Activated CD4-positive, alpha-beta memory T cell treated with anti-CD3 and anti-CD28 coated beads for 36 hours (primary cell): ENCODE measurements at regions of chr6 and their contacts with region 1.

Region 1: DNA sequence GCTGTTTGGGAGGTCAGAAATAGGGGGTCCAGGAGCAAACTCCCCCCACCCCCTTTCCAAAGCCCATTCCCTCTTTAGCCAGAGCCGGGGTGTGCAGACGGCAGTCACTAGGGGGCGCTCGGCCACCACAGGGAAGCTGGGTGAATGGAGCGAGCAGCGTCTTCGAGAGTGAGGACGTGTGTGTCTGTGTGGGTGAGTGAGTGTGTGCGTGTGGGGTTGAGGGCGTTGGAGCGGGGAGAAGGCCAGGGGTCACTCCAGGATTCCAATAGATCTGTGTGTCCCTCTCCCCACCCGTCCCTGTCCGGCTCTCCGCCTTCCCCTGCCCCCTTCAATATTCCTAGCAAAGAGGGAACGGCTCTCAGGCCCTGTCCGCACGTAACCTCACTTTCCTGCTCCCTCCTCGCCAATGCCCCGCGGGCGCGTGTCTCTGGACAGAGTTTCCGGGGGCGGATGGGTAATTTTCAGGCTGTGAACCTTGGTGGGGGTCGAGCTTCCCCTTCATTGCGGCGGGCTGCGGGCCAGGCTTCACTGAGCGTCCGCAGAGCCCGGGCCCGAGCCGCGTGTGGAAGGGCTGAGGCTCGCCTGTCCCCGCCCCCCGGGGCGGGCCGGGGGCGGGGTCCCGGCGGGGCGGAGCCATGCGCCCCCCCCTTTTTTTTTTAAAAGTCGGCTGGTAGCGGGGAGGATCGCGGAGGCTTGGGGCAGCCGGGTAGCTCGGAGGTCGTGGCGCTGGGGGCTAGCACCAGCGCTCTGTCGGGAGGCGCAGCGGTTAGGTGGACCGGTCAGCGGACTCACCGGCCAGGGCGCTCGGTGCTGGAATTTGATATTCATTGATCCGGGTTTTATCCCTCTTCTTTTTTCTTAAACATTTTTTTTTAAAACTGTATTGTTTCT is at the start of gene VEGFA:
- DNase-seq: peak; percentile 92
- H3K4me3 Mint-ChIP-seq: peak within 1 kb of the TSS; percentile 93
- H3K27ac Mint-ChIP-seq: peak within 1 kb of the TSS; percentile 82
- H3K4me1 Mint-ChIP-seq: peaks cover 20% of the 10 kb centered on the region
- H3K27me3 Mint-ChIP-seq: peaks cover 8% of the 10 kb centered on the region
- total RNA-seq, gene VEGFA: 28.9 to 35.1 TPM

Region 2: GRCh38 chr6:43629505-43630300 is 140.1 kb before region 1 on chr6:
- CTCF ChIA-PET with region 1: interaction called, 5 read pairs
- POLR2A ChIA-PET with region 1: interaction called, 10 read pairs
- intact Hi-C with region 1: loop called (anchors 2 kb)
- DNase-seq: peak; percentile 97
- H3K4me3 Mint-ChIP-seq: peak overlapping the region; percentile 93
- H3K27ac Mint-ChIP-seq: peak overlapping the region; percentile 98
- H3K4me1 Mint-ChIP-seq: peaks cover 29% of the 10 kb centered on the region
- H3K27me3 Mint-ChIP-seq: no peaks in the 10 kb centered on the region

Region 3: DNA sequence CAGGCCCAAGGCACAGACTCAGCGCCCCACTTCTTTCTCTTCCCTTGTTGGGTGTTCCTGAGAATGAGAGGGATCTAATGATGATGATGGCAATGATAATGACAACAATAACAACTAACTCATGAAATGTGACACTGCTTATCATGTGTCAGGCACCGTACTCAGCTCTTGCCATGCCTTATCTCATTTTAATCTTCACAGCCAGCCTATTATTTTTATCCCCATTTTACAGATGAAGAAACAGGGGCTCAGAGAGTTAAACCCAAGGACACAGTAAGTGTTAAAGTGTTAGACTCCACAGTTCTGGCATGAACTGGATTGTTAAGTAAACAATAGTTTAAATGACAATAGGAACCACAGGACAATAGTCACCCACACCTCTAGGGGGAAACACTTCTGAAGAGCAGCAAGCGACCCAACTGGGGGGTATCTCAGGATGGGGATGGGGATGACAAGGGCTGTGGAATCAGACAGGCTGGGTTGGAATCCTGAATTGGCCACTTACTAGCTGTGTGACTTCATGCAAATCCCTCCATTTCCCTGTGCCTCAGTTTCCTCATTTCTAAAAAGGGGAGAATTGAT is 112.5 kb before region 1 on chr6:
- CTCF ChIA-PET with region 1: no interaction called
- POLR2A ChIA-PET with region 1: no interaction called
- intact Hi-C with region 1: no loop called
- DNase-seq: no peak
- H3K4me3 Mint-ChIP-seq: no peak overlapping the region
- H3K27ac Mint-ChIP-seq: no peak overlapping the region
- H3K4me1 Mint-ChIP-seq: peaks cover 2% of the 10 kb centered on the region
- H3K27me3 Mint-ChIP-seq: peaks cover 5% of the 10 kb centered on the region

Region 4: GRCh38 chr6:43758617-43759050 is 11.1 kb before region 1 on chr6:
- CTCF ChIA-PET with region 1: interaction called, 19 read pairs
- POLR2A ChIA-PET with region 1: interaction called, 5 read pairs
- intact Hi-C with region 1: no loop called
- DNase-seq: peak; percentile 48
- H3K4me3 Mint-ChIP-seq: no peak overlapping the region
- H3K27ac Mint-ChIP-seq: no peak overlapping the region
- H3K4me1 Mint-ChIP-seq: peaks cover 5% of the 10 kb centered on the region
- H3K27me3 Mint-ChIP-seq: no peaks in the 10 kb centered on the region

Region 5: GRCh38 chr6:44002593-44003344 is 233.0 kb after region 1 on chr6:
- CTCF ChIA-PET with region 1: interaction called, 8 read pairs
- POLR2A ChIA-PET with region 1: no interaction called
- intact Hi-C with region 1: loop called (anchors 1 kb)
- DNase-seq: peak; percentile 80
- H3K4me3 Mint-ChIP-seq: peak overlapping the region; percentile 64
- H3K27ac Mint-ChIP-seq: no peak overlapping the region
- H3K4me1 Mint-ChIP-seq: peaks cover 12% of the 10 kb centered on the region
- H3K27me3 Mint-ChIP-seq: peaks cover 38% of the 10 kb centered on the region

Region 6: DNA sequence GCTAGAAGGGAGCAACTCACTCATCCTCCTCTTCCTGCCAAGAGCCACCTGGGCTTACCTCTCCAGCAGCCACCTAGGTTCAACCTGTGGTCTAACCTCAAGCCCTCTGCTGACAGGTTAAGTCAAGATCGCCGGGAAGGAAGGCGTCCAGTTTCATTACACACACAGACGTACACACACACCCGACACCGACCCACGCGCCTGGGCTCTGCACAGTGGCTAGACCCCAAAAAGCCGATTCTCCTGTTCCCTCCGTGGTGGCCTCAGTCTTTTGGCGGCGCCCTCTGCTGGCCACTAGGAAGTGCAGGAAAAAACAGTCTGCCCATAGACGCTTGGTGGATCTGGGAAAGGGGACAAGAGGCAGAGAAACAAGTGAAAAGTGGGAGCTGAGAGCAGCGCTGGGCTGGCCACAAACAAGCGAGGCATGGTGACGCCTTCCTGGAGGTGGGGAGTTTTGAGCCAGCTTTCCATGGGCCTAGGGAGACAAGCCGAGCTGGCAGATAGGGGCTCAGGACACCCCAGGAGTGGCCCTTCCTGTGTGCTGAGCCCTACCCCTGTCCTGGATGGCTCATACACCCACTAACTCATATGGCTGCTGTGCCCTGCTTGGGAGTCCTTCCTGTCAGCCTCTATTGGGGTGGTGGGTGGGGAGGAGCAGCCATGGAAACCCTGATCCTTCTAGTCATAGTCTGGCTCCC is 304.8 kb after region 1 on chr6:
- CTCF ChIA-PET with region 1: interaction called, 172 read pairs
- POLR2A ChIA-PET with region 1: interaction called, 27 read pairs
- intact Hi-C with region 1: loop called (anchors 1 kb)
- DNase-seq: peak; percentile 81
- H3K4me3 Mint-ChIP-seq: peak overlapping the region; percentile 81
- H3K27ac Mint-ChIP-seq: peak overlapping the region; percentile 24
- H3K4me1 Mint-ChIP-seq: peaks cover 15% of the 10 kb centered on the region
- H3K27me3 Mint-ChIP-seq: peaks cover 14% of the 10 kb centered on the region

Region 7: GRCh38 chr6:44246663-44247337 is 477.0 kb after region 1 on chr6 and contains the start of gene HSP90AB1:
- CTCF ChIA-PET with region 1: no interaction called
- POLR2A ChIA-PET with region 1: interaction called, 3 read pairs
- intact Hi-C with region 1: loop called (anchors 5 kb)
- DNase-seq: peak; percentile 99
- H3K4me3 Mint-ChIP-seq: peak within 1 kb of the TSS; percentile 96
- H3K27ac Mint-ChIP-seq: peak within 1 kb of the TSS; percentile 99
- H3K4me1 Mint-ChIP-seq: peaks cover 45% of the 10 kb centered on the region
- H3K27me3 Mint-ChIP-seq: peaks cover 4% of the 10 kb centered on the region
- total RNA-seq, gene HSP90AB1: 1,671 to 1,695 TPM